Caco-2 (cell line): ENCODE measurements at regions of chr6 and their contacts with region 1.

Region 1: DNA sequence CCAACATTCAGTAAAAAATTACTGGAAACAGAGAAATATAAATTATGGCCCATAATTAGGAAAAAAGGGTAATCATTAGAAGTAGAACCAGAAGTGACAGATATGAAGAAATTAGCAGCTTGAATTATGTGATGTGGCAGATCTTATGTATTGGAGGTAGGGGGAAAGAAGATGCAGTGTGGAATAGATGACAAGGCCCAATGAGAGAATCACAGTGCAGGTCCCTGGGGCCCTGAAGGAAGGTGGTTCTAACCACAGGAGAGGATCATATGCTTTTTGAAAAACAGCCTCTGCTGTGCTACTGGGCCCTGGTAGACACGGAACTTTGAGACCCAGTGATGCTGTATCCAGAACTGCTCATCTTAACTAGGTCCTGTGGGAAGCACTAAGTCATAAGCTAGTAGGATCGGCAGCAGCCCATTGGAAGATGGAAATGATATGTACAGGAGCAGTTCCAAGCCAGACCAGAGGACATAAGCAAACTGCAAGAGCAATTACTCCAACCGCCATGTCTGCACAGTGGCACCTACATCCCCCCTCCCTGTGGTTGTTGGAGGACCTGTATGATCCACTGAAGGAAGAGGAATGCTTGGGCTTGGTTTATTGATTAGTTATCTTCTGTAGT is 14.2 kb downstream of the HEBP2 start:
- DNase-seq: no peak
- H3K4me3 ChIP-seq: no peak overlapping the region
- H3K4me3 Mint-ChIP-seq: no peak overlapping the region
- H3K27ac Mint-ChIP-seq: no peak overlapping the region
- H3K4me1 ChIP-seq: no peaks in the 10 kb centered on the region
- H3K4me1 Mint-ChIP-seq: no peaks in the 10 kb centered on the region
- H3K27me3 ChIP-seq: no peaks in the 10 kb centered on the region
- H3K27me3 Mint-ChIP-seq: no peaks in the 10 kb centered on the region
- CTCF ChIP-seq: no peak

Region 2: GRCh38 chr6:138240476-138241245 is 177.6 kb before region 1 on chr6:
- CTCF ChIA-PET with region 1: no interaction called
- POLR2A ChIA-PET with region 1: no interaction called
- intact Hi-C with region 1: no loop called
- DNase-seq: no peak
- H3K4me3 ChIP-seq: no peak overlapping the region
- H3K4me3 Mint-ChIP-seq: no peak overlapping the region
- H3K27ac Mint-ChIP-seq: no peak overlapping the region
- H3K4me1 ChIP-seq: no peaks in the 10 kb centered on the region
- H3K4me1 Mint-ChIP-seq: no peaks in the 10 kb centered on the region
- H3K27me3 ChIP-seq: no peaks in the 10 kb centered on the region
- H3K27me3 Mint-ChIP-seq: no peaks in the 10 kb centered on the region
- CTCF ChIP-seq: no peak

Region 3: GRCh38 chr6:138640028-138640427 is 221.8 kb after region 1 on chr6:
- CTCF ChIA-PET with region 1: no interaction called
- POLR2A ChIA-PET with region 1: interaction called, 14 read pairs
- intact Hi-C with region 1: no loop called
- DNase-seq: no peak
- H3K4me3 ChIP-seq: no peak overlapping the region
- H3K4me3 Mint-ChIP-seq: no peak overlapping the region
- H3K27ac Mint-ChIP-seq: no peak overlapping the region
- H3K4me1 ChIP-seq: peaks cover 8% of the 10 kb centered on the region
- H3K4me1 Mint-ChIP-seq: peaks cover 10% of the 10 kb centered on the region
- H3K27me3 ChIP-seq: no peaks in the 10 kb centered on the region
- H3K27me3 Mint-ChIP-seq: no peaks in the 10 kb centered on the region
- CTCF ChIP-seq: no peak